Ascending aorta (tissue), 2 donors: ENCODE measurements at regions of chr9 and their contacts with region 1.

Region 1: DNA sequence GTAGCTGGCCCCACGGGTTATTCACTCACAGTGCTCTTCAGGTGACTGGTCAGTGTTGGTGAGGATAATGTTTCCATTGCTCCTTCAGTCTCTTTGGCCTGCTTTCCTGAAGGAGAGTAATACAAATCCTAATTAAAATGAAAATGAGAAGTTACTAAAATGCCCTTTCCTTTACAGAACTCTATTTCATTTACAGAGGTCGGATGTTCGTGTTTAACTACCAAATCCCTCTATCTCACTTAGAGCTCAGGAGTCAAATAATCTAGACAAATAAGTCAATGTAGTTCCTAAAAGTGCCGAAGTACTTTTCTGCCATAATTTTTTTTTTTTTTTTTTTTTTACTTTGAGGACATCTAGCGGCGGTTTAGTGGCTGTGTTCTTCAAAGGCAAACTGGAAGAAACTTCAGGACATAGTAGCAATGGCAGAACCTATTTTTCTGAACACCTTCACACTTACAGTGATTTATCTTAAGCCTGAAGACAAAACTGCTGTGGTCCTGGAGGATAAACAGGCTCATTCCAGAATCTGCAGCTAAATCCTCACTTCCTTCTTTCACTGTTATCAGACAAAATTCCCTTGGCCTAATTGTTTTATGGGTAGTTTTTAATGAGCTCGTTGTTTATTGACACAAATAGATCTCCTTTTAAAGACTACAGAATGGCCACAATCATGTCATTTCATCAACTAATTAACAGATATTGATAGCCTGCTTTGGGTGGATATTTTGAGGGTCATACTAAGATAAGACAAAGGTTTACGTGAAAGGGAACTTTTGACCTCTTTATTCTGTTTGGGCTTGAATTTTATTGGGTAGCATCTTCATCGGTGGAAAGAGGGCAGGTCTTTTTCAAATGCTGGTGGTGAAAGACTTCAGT is 207.6 kb upstream of the DMRTA1 start:
- DNase-seq: no peak
- H3K4me3 ChIP-seq: no peak overlapping the region
- H3K27ac ChIP-seq: no peak overlapping the region
- H3K4me1 ChIP-seq: peaks cover 0 to 3% of the 10 kb centered on the region in 2 donors
- H3K27me3 ChIP-seq: no peaks in the 10 kb centered on the region
- CTCF ChIP-seq: peak in 1 of 3 experiments; percentile 39

Region 2: DNA sequence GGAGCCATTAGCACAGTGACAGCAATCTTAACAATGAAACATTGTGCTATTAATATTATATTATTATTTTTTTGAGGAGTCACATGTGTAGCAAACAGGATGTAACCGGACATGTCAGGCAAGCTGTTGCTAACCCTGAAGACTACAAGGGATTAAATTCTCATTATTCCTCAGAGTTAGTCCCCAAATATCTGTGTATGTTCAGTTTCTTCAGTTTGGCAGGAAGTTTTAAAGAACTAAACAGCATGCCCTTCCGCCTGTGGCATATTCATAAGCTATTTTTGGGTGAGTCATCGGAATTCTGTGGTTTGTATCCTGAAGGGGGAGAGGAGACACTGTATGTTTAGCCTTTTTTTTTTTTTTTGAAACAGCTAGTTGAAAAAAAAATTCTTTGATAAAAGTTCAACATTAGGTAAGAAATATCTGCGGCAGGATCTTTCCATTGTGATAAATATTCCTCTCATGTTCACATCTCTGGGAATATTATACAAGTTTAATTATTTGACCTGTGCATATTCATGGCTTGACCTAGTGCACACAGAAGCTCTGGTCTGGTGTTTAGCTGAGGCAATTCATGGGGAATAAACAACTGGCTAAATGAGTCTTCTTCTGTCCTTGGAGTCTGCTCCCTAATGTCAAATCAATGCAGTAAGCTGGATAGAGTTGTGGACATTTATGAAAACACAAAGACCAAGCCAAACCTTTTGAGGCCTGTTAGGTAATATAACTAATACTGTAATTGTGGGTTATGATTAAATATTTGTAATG is 27.3 kb before region 1 on chr9:
- intact Hi-C with region 1: no loop called
- DNase-seq: no peak
- H3K4me3 ChIP-seq: no peak overlapping the region
- H3K27ac ChIP-seq: no peak overlapping the region
- H3K4me1 ChIP-seq: no peaks in the 10 kb centered on the region
- H3K27me3 ChIP-seq: no peaks in the 10 kb centered on the region
- CTCF ChIP-seq: no peak

Region 3: GRCh38 chr9:22452415-22453010 is 213.5 kb after region 1 on chr9:
- intact Hi-C with region 1: loop called (anchors 2 kb)
- DNase-seq: no peak
- H3K4me3 ChIP-seq: no peak overlapping the region
- H3K27ac ChIP-seq: no peak overlapping the region
- H3K4me1 ChIP-seq: peaks cover under 1 to 3% of the 10 kb centered on the region in 2 donors
- H3K27me3 ChIP-seq: no peaks in the 10 kb centered on the region
- CTCF ChIP-seq: peak in 2 of 3 experiments; percentile 66 to 72

Region 4: DNA sequence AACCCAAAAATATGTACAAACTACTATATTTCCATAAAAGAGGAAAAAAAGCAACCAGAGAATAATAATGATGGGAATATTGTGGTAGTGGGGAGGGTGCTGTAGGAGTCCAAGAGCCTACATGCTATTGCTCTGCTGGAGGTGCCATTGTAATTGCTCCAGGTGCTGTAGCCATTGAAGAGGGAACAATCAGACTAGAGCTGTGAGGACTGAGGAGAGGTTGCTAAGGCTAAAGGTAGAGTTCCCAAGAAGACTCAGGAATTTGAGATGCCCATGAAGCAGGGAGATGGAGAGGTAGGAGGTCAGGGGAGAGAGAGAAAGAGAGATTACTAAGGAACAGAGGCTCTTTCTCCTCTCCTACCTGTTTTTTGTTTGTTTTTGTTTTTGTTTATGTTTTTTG is 601.6 kb after region 1 on chr9:
- intact Hi-C with region 1: no loop called
- DNase-seq: no peak
- H3K4me3 ChIP-seq: no peak overlapping the region
- H3K27ac ChIP-seq: no peak overlapping the region
- H3K4me1 ChIP-seq: no peaks in the 10 kb centered on the region
- H3K27me3 ChIP-seq: no peaks in the 10 kb centered on the region
- CTCF ChIP-seq: no peak